ENCODE measurements at regions of chr2 and their contacts with region 1.

Region 1: DNA sequence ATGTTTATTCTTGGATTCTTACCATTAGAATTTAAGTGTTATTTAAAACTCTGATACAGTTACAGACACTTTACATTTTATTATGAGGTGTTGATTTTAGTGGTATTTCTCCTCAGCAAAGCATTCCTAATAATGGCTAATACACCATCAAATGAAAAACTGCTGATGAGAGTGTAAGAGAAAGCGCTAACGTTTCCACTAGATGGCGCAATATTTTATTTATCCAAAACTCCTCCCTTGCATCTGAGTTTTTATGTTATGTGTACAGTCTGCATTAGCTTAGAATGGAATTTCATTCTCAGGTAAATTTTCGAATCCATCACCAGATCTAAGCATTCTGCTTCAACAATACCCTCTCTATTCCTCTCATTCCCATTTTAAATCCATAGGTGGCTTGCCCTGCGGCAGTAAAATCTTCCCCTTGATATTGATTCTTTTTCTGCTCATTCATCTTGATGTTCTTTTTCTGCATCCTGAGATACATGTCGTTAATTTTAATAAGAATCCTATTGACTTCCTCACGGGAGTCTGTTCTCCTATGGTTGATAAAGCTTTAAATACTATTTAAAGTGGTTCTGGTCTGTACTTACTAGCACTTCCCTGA is 53.9 kb downstream of the PRKRA start:
- DNase-seq: peak; percentile 24
- H3K4me3 ChIP-seq: no peak overlapping the region
- H3K27ac ChIP-seq: no peak overlapping the region
- H3K4me1 ChIP-seq: no peaks in the 10 kb centered on the region
- H3K27me3 ChIP-seq: no peaks in the 10 kb centered on the region
- CTCF ChIP-seq: peak; percentile 54 to 72

Region 2: DNA sequence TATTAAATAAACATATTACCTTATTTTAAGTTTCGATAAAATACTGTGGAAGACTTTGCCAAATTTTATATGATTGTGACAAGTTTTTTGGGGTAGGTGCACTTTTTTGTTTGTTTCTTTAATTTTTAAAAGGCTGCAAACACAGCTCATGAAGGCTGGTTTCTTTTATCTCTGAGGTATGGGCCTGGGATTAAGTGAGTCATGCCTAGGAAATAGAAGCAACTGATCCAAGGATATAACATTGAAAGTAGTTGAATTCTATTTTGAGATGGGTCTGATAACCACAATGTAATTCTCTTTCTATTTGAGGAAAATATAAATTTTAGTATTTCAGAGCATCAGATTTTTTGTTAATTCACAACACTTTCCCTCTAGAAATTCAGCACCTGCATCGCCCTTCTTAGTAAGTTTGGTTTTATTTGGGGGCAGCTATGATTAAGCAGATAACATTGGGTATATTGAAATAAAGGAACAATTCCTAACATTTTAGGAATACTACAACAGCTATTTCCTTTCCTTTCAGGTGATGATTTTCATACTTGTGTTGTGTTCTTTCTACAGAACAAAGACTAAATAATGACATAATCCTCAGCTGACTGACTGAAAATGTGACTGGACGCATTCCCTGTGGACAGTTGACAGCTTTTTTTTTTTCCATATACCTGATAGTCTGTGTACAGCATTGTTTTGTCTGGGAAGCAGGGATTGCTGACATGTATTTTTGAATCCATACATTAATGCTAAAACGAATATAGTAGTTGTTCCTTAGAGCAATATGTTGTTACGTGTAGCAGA is 268.1 kb before region 1 on chr2:
- CTCF ChIA-PET with region 1: no interaction called
- dilution Hi-C with region 1: loop called (anchors 25 kb)
- in situ Hi-C with region 1: loop called in 1 of 2 experiments (anchors 25 kb)
- intact Hi-C with region 1: loop called (anchors 5 kb)
- DNase-seq: no peak
- H3K4me3 ChIP-seq: no peak overlapping the region
- H3K27ac ChIP-seq: no peak overlapping the region
- H3K4me1 ChIP-seq: no peaks in the 10 kb centered on the region
- H3K27me3 ChIP-seq: no peaks in the 10 kb centered on the region
- CTCF ChIP-seq: no peak

Region 3: GRCh38 chr2:178142274-178143065 is 254.6 kb before region 1 on chr2:
- CTCF ChIA-PET with region 1: no interaction called
- dilution Hi-C with region 1: no loop called
- in situ Hi-C with region 1: loop called in 1 of 2 experiments (anchors 25 kb)
- intact Hi-C with region 1: no loop called
- DNase-seq: no peak
- H3K4me3 ChIP-seq: no peak overlapping the region
- H3K27ac ChIP-seq: no peak overlapping the region
- H3K4me1 ChIP-seq: no peaks in the 10 kb centered on the region
- H3K27me3 ChIP-seq: no peaks in the 10 kb centered on the region
- CTCF ChIP-seq: no peak

Region 4: DNA sequence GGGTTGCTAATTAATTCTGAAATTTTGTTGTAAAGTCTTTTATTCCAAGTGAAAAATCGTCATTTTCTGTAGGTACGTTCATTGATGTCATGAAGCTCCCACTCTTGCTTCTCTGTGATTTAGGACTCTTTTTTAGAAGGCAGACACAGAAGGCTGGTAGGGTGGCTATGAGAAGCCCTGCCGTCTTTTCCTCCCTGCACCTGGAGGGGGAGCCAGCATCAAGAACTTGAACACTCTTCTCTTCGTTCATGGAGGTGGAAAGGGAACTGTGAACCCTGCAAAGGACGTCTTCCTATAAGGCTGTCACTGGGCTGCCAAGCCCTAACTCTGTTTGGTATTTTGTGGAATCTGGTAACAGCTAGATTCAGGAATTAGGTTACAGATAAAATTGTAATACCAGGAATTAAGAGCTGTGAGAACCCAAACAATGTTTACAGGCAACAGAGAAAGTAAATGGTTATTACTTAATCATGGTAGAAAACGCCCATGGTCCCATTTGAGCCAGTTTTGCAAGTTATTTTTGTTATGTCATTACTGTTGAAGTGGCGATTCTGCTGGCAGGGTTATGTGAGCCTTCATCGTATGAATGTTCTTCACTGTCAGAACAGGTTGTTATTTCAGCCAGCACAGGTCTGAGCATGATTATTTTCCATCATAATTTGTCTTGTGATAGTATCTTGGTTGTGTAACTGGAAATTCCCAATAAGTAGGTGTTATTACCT is 90.6 kb before region 1 on chr2:
- CTCF ChIA-PET with region 1: no interaction called
- dilution Hi-C with region 1: no loop called
- in situ Hi-C with region 1: no loop called
- intact Hi-C with region 1: loop called (anchors 5 kb)
- DNase-seq: peak; percentile 35
- H3K4me3 ChIP-seq: no peak overlapping the region
- H3K27ac ChIP-seq: no peak overlapping the region
- H3K4me1 ChIP-seq: peaks cover 4% of the 10 kb centered on the region
- H3K27me3 ChIP-seq: no peaks in the 10 kb centered on the region
- CTCF ChIP-seq: peak; percentile 48 to 77

Measured in mammary epithelial cell (primary cell).